ENCODE measurements at regions of chr12 and their contacts with region 1.

Region 1: DNA sequence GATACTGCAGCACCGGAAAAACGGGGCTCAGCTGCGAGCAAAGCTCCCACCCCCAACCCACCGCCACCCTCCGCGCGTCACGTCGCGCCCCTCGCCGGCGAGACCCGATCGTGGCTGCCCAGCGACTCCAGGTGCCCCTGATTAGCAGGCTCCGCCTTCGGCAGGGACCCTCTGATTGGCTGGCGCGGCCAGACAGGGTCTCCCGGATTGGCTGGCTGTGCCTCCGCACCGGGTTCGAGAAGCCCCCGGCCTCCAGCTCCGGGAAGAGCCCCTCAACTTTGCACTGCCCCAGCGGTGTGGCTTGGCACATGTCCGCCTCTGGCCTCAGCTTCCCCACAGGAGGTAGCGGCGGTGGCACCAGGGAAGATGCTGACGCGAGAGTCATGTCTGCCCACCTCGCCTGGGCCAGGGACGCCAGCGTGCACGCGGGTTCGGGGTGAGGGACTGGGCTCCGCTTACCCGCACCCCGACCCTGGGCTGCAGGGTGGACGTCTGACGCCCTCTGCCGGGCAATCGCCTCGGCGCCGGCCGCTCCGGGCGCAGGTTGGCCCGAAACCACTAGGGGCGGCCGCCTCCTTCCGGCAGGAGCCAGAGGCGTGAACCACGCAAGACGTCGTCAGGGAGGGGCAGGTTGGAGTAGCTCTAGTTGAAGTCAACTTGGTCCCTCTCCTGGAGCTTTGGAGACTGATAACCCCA is 498 bp upstream of the RHOF start:
- DNase-seq: peak; percentile 97 to 98
- ATAC-seq: peak; percentile 48 to 81 (median 59)
- H3K4me3 ChIP-seq: peak overlapping the region; percentile 86
- H3K4me3 Mint-ChIP-seq: peak overlapping the region; percentile 95
- H3K27ac ChIP-seq: peak overlapping the region; percentile 68
- H3K27ac Mint-ChIP-seq: peak overlapping the region; percentile 100
- H3K4me1 ChIP-seq: peaks cover 70% of the 10 kb centered on the region
- H3K4me1 Mint-ChIP-seq: peaks cover 60 to 72% of the 10 kb centered on the region in 2 donors
- H3K27me3 ChIP-seq: no peaks in the 10 kb centered on the region
- H3K27me3 Mint-ChIP-seq: no peaks in the 10 kb centered on the region
- CTCF ChIP-seq: peak; percentile 97

Region 2: DNA sequence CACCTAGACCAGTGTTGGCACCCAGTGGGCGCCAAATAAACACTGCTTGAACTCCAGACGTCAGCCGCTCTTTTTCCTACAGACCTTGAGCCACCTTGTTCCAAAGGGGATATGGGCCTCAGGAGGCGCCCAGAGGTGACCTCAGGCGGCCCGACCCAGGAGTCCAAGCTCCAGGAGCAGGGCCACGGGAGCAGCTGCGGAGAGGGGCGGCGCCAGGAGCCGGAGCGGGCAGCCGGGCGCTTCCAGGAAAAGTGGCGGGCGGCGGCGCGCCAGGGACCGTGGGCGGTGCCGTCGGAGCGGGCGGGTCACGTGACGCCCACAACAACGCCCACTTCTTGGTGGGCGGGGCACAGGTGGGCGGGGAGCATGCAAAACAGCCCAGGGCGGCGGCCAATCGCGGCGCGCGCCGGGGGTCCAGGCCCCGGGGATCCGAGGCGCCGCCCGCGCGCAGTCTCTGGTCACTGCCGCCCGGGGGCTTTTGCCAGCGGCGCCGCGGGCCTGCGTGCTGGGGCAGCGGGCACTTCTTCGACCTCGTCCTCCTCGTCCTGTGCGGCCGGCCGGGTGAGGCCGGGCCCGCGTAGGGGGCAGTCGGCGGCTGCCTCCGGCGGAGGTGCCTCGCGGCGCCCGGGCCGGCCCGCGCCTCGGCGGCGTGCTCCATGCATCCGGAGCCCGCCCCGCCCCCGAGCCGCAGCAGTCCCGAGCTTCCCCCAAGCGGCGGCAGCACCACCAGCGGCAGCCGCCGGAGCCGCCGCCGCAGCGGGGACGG is 167.7 kb before region 1 on chr12 and contains the start of gene ORAI1:
- intact Hi-C with region 1: loop called (anchors 5 kb)
- DNase-seq: peak; percentile 98
- ATAC-seq: peak; percentile 71 to 89 (median 78)
- H3K4me3 ChIP-seq: peak within 1 kb of the TSS; percentile 90
- H3K4me3 Mint-ChIP-seq: peak within 1 kb of the TSS; percentile 91
- H3K27ac ChIP-seq: peak within 1 kb of the TSS; percentile 99
- H3K27ac Mint-ChIP-seq: peak within 1 kb of the TSS; percentile 94
- H3K4me1 ChIP-seq: peaks cover 52% of the 10 kb centered on the region
- H3K4me1 Mint-ChIP-seq: peaks cover 41 to 52% of the 10 kb centered on the region in 2 donors
- H3K27me3 ChIP-seq: no peaks in the 10 kb centered on the region
- H3K27me3 Mint-ChIP-seq: no peaks in the 10 kb centered on the region
- CTCF ChIP-seq: no peak
- total RNA-seq, gene ORAI1: 64.6 to 74.1 (median 70.8) TPM

Region 3: GRCh38 chr12:121712461-121713256 is 81.3 kb before region 1 on chr12 and contains the start of gene TMEM120B:
- intact Hi-C with region 1: loop called (anchors 5 kb)
- DNase-seq: peak; percentile 87 to 91
- ATAC-seq: peak; percentile 93 to 97 (median 95)
- H3K4me3 ChIP-seq: peak within 1 kb of the TSS; percentile 86
- H3K4me3 Mint-ChIP-seq: peak within 1 kb of the TSS; percentile 90
- H3K27ac ChIP-seq: peak within 1 kb of the TSS; percentile 73
- H3K27ac Mint-ChIP-seq: peak within 1 kb of the TSS; percentile 86 to 95
- H3K4me1 ChIP-seq: peaks cover 21% of the 10 kb centered on the region
- H3K4me1 Mint-ChIP-seq: peaks cover 12 to 19% of the 10 kb centered on the region in 2 donors
- H3K27me3 ChIP-seq: no peaks in the 10 kb centered on the region
- H3K27me3 Mint-ChIP-seq: no peaks in the 10 kb centered on the region
- CTCF ChIP-seq: no peak
- total RNA-seq, gene TMEM120B: 6.3 to 8.4 (median 7.9) TPM

Region 4: DNA sequence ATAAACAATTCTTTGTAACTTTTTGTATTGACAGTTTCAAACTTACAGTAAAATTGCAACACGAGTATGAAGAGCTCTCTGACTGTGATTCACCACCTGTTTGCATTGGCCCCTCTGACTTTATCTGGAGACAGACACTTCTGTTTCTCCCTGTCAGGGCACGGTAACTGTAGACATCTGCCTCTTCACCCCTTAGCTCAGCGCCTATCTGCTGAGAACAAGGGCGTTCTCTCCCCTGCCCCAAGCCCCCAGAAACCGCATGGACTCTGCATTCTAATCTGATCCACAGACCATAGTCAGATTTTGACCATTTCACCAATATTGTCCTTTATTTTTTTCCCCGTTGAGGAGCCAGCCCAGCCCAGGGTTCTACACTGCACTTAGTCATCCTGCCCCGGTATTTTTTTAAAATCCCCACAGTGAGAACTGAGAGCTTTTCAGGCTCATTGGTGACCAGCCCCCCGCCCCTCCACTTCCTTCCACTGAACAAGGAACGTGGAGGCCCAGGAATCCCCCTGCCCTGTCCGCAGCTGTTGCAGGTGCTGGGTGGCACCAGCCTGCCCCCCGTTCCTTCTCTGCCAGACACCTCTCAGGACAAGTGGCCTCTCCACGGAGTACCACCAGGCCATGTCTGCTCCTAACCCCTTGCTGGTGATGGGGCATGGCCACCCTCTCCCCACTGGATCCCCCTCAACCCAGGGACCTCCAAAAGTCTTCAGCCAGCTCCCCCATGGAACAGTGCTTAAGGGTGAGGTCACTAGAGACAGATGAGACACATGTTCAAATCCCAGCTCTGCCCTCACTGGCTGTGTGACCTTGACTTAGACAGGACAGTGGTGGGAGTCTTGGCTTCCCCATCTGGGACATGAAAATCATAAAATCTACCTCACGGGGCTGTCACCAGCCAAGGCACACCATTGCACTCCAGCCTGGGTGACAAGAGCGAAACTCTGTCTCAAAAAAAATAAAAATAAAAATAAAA is 11.7 kb before region 1 on chr12:
- intact Hi-C with region 1: loop called (anchors 1 kb)
- DNase-seq: peak; percentile 55 to 70
- ATAC-seq: peak; percentile 62 to 71 (median 62)
- H3K4me3 ChIP-seq: no peak overlapping the region
- H3K4me3 Mint-ChIP-seq: peak overlapping the region; percentile 78
- H3K27ac ChIP-seq: peak overlapping the region; percentile 80
- H3K27ac Mint-ChIP-seq: peak overlapping the region; percentile 100
- H3K4me1 ChIP-seq: peaks cover 70% of the 10 kb centered on the region
- H3K4me1 Mint-ChIP-seq: peaks cover 49 to 65% of the 10 kb centered on the region in 2 donors
- H3K27me3 ChIP-seq: no peaks in the 10 kb centered on the region
- H3K27me3 Mint-ChIP-seq: no peaks in the 10 kb centered on the region
- CTCF ChIP-seq: no peak

Region 5: DNA sequence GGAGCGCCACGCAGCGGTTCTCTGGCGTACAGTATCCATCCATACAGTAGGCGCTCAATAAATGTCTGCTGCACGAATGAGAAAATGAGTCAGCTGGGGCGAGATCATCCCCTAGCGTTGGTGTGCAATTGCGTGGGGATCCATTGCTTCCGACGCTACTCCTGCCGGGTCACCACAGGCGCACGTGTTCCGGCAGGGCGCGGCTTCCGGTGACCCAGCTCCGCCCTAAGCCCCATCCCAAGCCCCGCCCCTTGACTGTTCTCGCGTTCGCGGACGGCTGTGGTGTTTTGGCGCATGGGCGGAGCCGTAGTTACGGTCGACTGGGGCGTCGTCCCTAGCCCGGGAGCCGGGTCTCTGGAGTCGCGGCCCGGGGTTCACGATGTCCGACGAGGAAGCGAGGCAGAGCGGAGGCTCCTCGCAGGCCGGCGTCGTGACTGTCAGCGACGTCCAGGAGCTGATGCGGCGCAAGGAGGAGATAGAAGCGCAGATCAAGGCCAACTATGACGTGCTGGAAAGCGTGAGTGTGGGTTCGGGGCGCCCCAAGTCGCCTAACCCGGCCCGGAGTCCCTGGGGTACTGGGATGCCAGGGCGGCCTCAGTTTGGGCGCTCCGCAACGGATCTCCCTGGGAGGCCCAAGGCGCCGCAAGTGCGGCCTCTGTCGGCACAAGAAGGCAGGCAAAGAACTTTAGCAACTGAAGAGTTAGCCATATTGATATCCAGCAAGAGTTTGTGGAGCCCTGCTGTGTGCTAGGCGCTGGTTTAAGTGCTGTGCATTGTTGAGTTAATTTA is 94.7 kb after region 1 on chr12 and contains the start of gene PSMD9:
- intact Hi-C with region 1: loop called (anchors 2 kb)
- DNase-seq: peak; percentile 95 to 99
- ATAC-seq: peak; percentile 94 to 99 (median 95)
- H3K4me3 ChIP-seq: peak within 1 kb of the TSS; percentile 87
- H3K4me3 Mint-ChIP-seq: peak within 1 kb of the TSS; percentile 100
- H3K27ac ChIP-seq: peak within 1 kb of the TSS; percentile 93
- H3K27ac Mint-ChIP-seq: peak within 1 kb of the TSS; percentile 99
- H3K4me1 ChIP-seq: peaks cover 24% of the 10 kb centered on the region
- H3K4me1 Mint-ChIP-seq: peaks cover 26 to 32% of the 10 kb centered on the region in 2 donors
- H3K27me3 ChIP-seq: no peaks in the 10 kb centered on the region
- H3K27me3 Mint-ChIP-seq: no peaks in the 10 kb centered on the region
- CTCF ChIP-seq: peak; percentile 54
- total RNA-seq, gene PSMD9: 32.0 to 47.6 (median 47.2) TPM

Region 6: DNA sequence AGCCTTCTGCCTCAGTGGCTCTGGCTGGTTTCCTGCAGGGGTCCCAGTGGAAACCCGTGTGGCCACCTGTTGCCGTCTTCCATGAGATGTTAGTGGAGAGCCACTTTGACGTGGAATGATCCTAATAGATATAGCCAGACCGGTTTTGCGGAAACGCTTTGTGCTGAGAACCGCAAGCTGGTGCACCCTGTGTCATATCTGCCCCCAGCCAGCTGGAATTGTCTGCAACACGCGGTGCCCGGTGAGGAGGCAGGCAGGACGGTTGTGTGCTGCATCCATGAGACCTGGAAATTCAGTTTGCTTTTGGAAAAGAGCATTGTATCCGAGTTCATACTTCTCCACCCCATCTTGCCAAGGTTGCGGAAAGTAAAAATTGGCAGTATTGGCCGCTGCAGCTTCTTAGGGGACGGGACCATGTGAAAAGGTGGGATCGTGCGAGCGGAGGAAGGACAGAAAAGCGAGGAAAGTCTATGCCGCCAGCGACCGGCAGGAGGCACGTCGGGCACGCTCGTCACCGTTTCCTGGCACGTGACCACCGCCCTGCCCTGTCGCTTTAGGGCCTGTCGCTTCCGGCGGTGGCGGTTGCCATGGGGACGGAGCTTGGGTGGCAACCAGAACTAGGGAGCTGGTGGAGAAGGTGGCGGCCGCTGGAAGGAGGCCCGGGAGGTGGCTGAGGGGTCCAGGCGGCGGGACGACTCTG is 124.1 kb after region 1 on chr12 and contains the start of gene CFAP251:
- intact Hi-C with region 1: no loop called
- DNase-seq: peak; percentile 95 to 98
- ATAC-seq: peak; percentile 98 to 99 (median 98)
- H3K4me3 ChIP-seq: peak within 1 kb of the TSS; percentile 35
- H3K4me3 Mint-ChIP-seq: peak within 1 kb of the TSS; percentile 88
- H3K27ac ChIP-seq: peak within 1 kb of the TSS; percentile 50
- H3K27ac Mint-ChIP-seq: peak within 1 kb of the TSS; percentile 88 to 91
- H3K4me1 ChIP-seq: peaks cover 13% of the 10 kb centered on the region
- H3K4me1 Mint-ChIP-seq: peaks cover 9 to 12% of the 10 kb centered on the region in 2 donors
- H3K27me3 ChIP-seq: no peaks in the 10 kb centered on the region
- H3K27me3 Mint-ChIP-seq: no peaks in the 10 kb centered on the region
- CTCF ChIP-seq: peak; percentile 74
- total RNA-seq, gene CFAP251: 0.59 to 0.80 (median 0.59) TPM

Measured in natural killer cell (primary cell).